AG04450 (cell line): ENCODE measurements at regions of chr17 and their contacts with region 1.

Region 1: DNA sequence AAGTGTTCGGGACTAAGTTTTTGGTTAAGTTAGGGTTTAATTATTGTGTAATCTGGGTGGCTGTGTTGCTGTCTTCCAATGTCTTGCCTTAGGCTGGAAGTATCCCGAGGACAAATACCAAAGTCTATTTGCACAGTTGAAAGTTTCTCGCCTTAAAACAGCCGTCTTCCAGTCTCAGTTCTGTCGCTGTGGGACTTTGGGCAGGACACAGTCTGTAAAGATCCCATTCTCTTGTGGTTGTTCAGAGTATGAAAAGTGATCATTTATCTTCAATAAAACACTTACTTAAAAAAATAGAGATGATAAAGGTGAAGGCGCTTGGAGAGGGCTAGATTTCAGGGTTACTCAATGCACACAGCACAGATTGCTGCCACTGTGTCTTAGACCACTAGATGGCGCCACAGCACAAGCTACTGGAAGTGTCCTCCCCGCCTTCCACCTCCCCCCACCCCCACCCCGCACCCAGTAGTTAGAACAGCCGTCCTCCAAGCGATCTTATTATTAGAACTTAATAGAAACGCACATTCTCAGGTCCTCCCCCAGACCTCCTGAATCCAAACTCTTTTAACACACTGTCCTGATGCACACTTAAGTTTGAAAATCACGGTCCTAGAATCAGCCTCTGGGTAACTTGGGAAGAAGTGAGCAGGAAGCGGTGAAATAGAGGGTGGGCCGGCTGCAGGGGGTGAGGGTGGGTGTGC is 45.9 kb downstream of the AKAP1 start:
- DNase-seq: peak; percentile 46
- H3K4me3 ChIP-seq: peak overlapping the region; percentile 43
- H3K27ac ChIP-seq: no peak overlapping the region
- H3K27me3 ChIP-seq: peaks cover 8% of the 10 kb centered on the region
- CTCF ChIP-seq: peak; percentile 82

Region 2: GRCh38 chr17:57747221-57748017 is 616.5 kb after region 1 on chr17:
- CTCF ChIA-PET with region 1: interaction called, 15 read pairs
- POLR2A ChIA-PET with region 1: no interaction called
- DNase-seq: peak; percentile 33
- H3K4me3 ChIP-seq: no peak overlapping the region
- H3K27ac ChIP-seq: no peak overlapping the region
- H3K27me3 ChIP-seq: peaks cover 26% of the 10 kb centered on the region
- CTCF ChIP-seq: peak; percentile 91

Region 3: DNA sequence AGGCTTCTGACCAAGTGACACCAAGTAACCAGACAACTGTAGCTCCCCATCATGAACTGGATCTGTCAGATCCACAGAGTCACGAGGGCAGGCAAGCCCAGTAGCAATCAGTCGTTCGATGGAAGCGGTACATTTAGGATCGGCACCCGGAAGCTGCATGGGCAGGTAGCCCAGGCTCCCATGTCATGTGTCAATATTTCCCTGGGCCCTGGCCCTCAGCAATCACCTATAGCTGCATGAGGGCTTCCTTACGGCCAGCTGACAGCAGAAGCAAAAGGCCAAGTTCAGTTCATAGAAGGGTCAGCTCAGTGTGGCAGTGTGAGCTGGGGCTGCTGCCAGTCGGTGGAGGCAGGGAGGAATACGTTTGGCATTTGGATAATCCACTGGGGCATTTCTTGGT is 687.2 kb after region 1 on chr17:
- CTCF ChIA-PET with region 1: no interaction called
- POLR2A ChIA-PET with region 1: interaction called, 11 read pairs
- DNase-seq: no peak
- H3K4me3 ChIP-seq: no peak overlapping the region
- H3K27ac ChIP-seq: no peak overlapping the region
- H3K27me3 ChIP-seq: peaks cover 16% of the 10 kb centered on the region
- CTCF ChIP-seq: no peak